Left lung (tissue), 14 donors: ENCODE measurements at regions of chr19 and their contacts with region 1.

Region 1: DNA sequence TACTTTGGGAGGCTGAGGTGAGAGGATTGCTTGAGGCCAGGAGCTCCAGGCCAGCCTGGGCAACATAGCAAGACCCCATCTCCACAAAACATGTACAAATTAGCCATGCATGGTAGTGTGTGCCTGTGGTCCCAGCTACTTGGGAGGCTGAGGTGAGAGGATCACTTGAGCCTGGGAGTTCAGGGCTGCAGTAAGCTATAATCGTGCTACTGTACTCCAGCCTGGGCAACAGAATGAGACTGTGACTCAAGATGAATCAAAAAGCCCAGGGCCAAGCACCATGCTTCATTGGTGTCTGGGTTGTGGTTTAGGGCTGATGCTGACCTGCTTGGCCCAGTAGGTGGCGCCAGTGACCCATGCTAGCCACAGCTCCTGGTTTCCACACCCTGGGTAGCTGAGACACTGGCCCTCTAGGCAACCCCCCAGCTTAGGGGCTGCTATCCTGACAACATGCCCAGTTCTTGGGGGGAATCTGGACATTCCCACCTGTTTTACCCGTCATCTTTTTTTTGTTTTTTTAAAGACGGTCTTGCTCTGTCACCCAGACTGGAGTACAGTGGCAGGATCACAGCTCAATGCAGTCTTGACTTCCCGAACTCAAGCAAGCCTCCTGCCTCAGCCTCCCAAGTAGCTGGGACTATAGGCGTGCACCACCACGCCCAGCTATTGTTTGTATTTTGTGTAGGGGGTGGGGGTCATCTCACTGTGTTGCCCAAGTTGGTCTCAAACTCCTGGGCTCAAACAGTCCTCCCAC is 5.5 kb downstream of the CCDC124 start:
- DNase-seq: peak in 3 of 4 donors; percentile 76 to 93 (median 76)
- ATAC-seq: peak; percentile 91
- H3K4me3 ChIP-seq: no peak overlapping the region
- H3K27ac ChIP-seq: no peak overlapping the region
- H3K4me1 ChIP-seq: peaks cover 8 to 13% of the 10 kb centered on the region in 2 donors
- H3K27me3 ChIP-seq: no peaks in the 10 kb centered on the region
- CTCF ChIP-seq: peak; percentile 92 to 94

Region 2: DNA sequence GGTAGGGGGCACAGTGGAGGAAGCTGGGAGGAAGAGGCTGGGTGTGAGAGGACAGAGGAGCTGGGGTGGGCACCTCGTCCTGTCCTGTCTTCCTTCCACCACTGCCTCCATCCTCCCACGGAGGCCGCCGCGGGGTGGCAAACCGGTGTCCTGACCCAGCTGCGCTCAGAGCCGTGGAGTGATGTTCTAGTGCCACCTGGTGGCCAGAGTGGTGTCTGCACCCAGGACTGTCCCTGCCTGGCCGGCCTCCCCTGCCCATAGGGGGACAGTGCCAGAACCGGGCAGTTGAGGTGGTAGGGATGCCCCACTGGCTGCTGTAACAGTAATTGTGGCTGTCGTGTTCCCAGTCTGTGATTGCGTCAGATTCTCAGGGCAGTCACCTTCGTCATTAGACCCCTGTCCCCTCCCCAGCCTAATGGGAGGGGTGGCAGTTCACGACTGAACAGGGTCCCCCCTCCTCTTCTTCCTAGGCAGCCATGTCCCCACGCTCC is 58.6 kb after region 1 on chr19:
- intact Hi-C with region 1: loop called in 1 of 2 experiments (anchors 2 kb)
- DNase-seq: peak; percentile 73 to 97 (median 86)
- ATAC-seq: peak; percentile 81
- H3K4me3 ChIP-seq: no peak overlapping the region
- H3K27ac ChIP-seq: no peak overlapping the region
- H3K4me1 ChIP-seq: peaks cover 0 to 34% of the 10 kb centered on the region in 2 donors
- H3K27me3 ChIP-seq: peaks cover 0 to 33% of the 10 kb centered on the region in 2 donors
- CTCF ChIP-seq: peak; percentile 93 to 100

Region 3: DNA sequence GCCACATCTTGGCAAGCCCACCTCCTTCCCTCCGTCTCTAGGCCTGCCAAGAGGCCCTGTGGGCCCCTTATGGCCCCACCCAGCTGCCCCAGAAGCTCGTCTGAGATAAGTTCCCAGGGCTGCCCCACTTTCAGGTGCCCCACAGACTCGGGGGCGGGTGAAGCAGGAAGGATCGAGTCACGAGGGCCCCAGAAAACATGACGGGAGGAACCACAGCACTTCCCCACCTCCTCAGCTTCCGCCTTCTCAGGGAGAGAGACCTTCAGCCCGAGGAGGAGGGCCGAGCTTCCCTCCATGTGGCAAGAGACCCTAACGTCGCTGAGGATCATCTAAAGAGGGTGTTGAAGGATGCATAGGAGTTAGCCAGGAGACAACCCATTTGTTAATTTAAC is 152.9 kb after region 1 on chr19:
- intact Hi-C with region 1: no loop called
- DNase-seq: peak in 2 of 4 donors; percentile 87 to 91
- ATAC-seq: peak; percentile 64
- H3K4me3 ChIP-seq: no peak overlapping the region
- H3K27ac ChIP-seq: peak overlapping the region; percentile 78 to 97
- H3K4me1 ChIP-seq: peaks cover 0 to 56% of the 10 kb centered on the region in 2 donors
- H3K27me3 ChIP-seq: no peaks in the 10 kb centered on the region
- CTCF ChIP-seq: no peak